Activated CD4-positive, alpha-beta memory T cell treated with anti-CD3 and anti-CD28 coated beads for 36 hours (primary cell): ENCODE measurements at regions of chr3 and their contacts with region 1.

Region 1: GRCh38 chr3:36876181-36876936 is 68.5 kb downstream of the TRANK1 start:
- DNase-seq: peak; percentile 26
- H3K4me3 Mint-ChIP-seq: peak overlapping the region; percentile 21
- H3K27ac Mint-ChIP-seq: peak overlapping the region; percentile 71
- H3K4me1 Mint-ChIP-seq: peaks cover 42% of the 10 kb centered on the region
- H3K27me3 Mint-ChIP-seq: peaks cover 3% of the 10 kb centered on the region

Region 2: GRCh38 chr3:36606871-36607765 is 269.2 kb before region 1 on chr3:
- CTCF ChIA-PET with region 1: no interaction called
- POLR2A ChIA-PET with region 1: no interaction called
- intact Hi-C with region 1: no loop called
- DNase-seq: no peak
- H3K4me3 Mint-ChIP-seq: no peak overlapping the region
- H3K27ac Mint-ChIP-seq: no peak overlapping the region
- H3K4me1 Mint-ChIP-seq: no peaks in the 10 kb centered on the region
- H3K27me3 Mint-ChIP-seq: peaks cover 12% of the 10 kb centered on the region

Region 3: DNA sequence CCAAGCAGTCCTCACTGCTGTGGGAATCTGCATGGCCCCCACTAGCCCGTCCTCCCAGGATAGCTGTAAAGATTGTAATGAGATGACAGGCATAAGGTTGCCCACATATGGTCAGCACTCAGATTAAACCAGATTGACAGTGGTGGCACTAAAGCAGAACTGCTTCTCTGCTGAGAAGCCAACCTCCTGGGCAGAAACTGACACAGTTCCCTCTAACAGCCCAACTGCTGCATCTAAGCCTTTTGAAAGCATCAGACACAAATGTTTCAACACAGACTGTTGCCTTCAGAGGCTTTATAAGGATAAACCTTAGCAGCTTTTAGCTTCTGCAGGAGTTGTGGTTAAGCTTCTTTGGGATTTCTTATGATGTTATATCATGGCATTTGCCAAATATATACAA is 125.0 kb before region 1 on chr3:
- CTCF ChIA-PET with region 1: no interaction called
- POLR2A ChIA-PET with region 1: no interaction called
- intact Hi-C with region 1: no loop called
- DNase-seq: no peak
- H3K4me3 Mint-ChIP-seq: no peak overlapping the region
- H3K27ac Mint-ChIP-seq: no peak overlapping the region
- H3K4me1 Mint-ChIP-seq: no peaks in the 10 kb centered on the region
- H3K27me3 Mint-ChIP-seq: peaks cover 31% of the 10 kb centered on the region

Region 4: DNA sequence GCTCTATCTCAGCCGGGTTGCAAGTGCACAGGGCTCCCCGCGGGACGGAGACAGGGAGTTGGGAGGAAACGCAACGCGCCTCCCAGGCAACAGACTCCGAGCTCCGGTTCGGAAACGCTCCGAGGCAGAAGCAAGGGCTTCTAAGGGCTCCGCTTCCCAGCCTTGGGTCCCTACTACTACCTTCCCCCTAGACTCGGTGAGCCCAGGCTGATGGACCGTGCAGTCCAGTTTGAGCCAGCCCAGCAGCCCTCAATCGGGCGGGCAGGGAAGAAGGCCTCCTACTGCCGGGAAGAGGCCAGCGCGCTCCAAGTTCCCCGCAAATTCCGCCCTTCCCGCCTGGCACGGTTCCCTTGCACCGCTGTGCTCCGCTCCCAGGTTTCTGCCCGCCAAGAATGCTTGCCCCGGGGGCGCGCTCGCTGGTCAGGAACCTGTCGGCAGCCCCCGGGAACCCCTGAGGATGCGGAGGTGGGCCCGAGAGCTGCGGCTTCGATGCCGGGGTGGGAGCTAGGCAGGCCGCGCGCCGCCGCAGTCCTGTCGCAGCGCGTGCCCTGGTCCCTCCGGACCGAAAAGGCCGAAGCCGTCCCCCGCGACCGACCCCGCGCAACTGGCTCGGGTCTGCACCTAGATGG is 67.8 kb after region 1 on chr3:
- CTCF ChIA-PET with region 1: no interaction called
- POLR2A ChIA-PET with region 1: interaction called, 6 read pairs
- intact Hi-C with region 1: loop called (anchors 2 kb)
- DNase-seq: peak; percentile 50
- H3K4me3 Mint-ChIP-seq: peak overlapping the region; percentile 80
- H3K27ac Mint-ChIP-seq: no peak overlapping the region
- H3K4me1 Mint-ChIP-seq: peaks cover 16% of the 10 kb centered on the region
- H3K27me3 Mint-ChIP-seq: no peaks in the 10 kb centered on the region

Region 5: DNA sequence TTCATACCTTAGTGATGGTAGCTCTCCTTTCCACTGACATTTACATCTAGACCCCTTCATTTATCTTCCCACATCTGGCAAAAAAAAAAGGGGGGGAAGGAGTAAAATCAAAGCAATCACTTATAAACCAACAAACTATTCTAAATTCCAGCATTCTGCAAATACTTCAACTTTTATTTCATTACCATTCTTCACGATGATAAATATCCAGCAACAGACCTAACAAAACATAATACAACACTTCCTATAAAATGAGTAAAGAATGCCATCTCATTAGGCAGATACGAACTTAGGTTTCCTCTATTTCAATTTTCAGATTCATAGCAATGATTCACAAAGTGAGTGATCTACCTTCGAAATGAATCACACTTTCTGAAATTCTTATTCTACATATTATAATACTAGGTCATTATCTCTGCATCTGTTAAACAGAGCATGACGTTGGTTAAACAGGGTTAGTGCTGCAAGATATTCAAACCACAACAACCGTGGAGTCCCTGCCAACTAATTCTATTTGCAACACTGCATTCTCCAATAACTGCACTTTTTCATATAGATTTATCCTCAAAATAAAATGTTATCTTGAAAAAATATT is 298.3 kb after region 1 on chr3 and contains the start of gene LRRFIP2:
- CTCF ChIA-PET with region 1: no interaction called
- POLR2A ChIA-PET with region 1: no interaction called
- intact Hi-C with region 1: loop called (anchors 1 kb)
- DNase-seq: peak; percentile 41
- H3K4me3 Mint-ChIP-seq: peak within 1 kb of the TSS; percentile 83
- H3K27ac Mint-ChIP-seq: peak within 1 kb of the TSS; percentile 80
- H3K4me1 Mint-ChIP-seq: peaks cover 41% of the 10 kb centered on the region
- H3K27me3 Mint-ChIP-seq: no peaks in the 10 kb centered on the region
- total RNA-seq, gene LRRFIP2: 25.9 to 30.7 TPM